BJ (cell line): ENCODE measurements at regions of chr9 and their contacts with region 1.

Region 1: GRCh38 chr9:131178382-131178781 is 53.0 kb downstream of the NUP214 start:
- DNase-seq: no peak
- H3K4me3 ChIP-seq: no peak overlapping the region
- H3K27me3 ChIP-seq: no peaks in the 10 kb centered on the region
- CTCF ChIP-seq: peak; percentile 92

Region 2: DNA sequence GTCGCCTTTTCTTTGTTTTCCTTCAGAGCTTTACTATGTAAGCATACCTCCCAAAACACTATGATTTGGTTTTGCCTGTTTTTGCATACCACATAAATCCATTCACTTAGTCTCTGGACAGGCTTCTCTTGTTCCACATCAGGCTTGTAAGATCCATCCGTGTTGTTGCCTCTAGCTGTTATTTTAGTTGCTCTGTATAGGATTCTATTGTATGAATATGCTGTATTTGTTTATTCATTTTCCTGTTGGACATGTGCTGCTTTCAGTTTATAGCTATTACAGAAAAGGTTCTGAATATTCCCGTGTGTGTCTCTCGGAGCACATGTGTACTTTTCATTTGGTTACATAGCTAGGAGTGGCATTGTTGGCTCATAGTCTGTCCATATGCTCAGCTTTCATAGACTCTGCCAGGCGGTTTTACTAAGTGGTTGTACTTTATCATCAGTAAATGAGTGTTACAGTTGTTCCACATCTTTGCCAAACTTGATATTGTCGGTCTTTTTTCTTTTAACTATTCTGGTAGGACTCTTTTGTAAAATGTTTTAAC is 11.2 kb before region 1 on chr9:
- CTCF ChIA-PET with region 1: interaction called, 29 read pairs
- POLR2A ChIA-PET with region 1: no interaction called
- DNase-seq: no peak
- H3K4me3 ChIP-seq: no peak overlapping the region
- H3K27me3 ChIP-seq: no peaks in the 10 kb centered on the region
- CTCF ChIP-seq: no peak

Region 3: GRCh38 chr9:131788341-131788740 is 610.0 kb after region 1 on chr9:
- CTCF ChIA-PET with region 1: no interaction called
- POLR2A ChIA-PET with region 1: no interaction called
- DNase-seq: no peak
- H3K4me3 ChIP-seq: no peak overlapping the region
- H3K27me3 ChIP-seq: peaks cover 7% of the 10 kb centered on the region
- CTCF ChIP-seq: no peak

Region 4: DNA sequence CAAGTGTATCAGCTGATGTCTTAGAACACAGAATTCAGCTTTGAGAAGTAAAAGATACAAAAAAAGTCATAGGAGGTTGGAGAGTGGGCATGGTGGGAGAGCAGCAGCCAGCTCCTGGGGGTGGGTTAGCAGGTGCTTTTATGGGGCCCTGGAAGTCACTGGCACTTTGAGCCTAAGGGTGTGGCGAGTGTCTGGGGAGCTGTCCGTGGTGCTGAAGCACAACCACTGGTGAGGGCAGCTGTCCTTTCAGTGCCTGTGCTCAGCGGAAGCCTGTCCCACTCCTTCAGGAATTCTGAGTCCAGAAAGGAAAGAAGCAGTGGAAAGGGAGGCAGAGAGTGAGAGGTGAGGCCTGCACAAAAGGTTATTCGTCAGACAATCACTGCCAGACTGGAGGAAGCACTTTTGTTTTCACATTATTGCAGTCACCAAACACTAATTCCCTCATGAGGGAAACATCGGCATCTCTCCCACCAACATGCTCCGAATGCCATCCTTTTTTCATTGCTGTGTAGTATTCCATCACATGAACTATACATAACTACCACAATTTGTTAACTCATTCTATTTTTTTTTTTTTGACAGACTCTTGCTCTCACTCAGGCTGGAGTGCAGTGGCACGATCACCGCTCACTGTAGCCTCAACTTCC is 620.9 kb after region 1 on chr9:
- CTCF ChIA-PET with region 1: no interaction called
- POLR2A ChIA-PET with region 1: no interaction called
- DNase-seq: no peak
- H3K4me3 ChIP-seq: no peak overlapping the region
- H3K27me3 ChIP-seq: peaks cover 5% of the 10 kb centered on the region
- CTCF ChIP-seq: no peak